OCI-LY7 (cell line): ENCODE measurements at regions of chr16 and their contacts with region 1.

Region 1: GRCh38 chr16:88505405-88506082 is 52.5 kb downstream of the ZFPM1 start:
- DNase-seq: peak; percentile 79
- H3K4me3 ChIP-seq: no peak overlapping the region
- H3K27ac ChIP-seq: no peak overlapping the region
- H3K4me1 ChIP-seq: peaks cover 12% of the 10 kb centered on the region
- CTCF ChIP-seq: peak; percentile 76

Region 2: DNA sequence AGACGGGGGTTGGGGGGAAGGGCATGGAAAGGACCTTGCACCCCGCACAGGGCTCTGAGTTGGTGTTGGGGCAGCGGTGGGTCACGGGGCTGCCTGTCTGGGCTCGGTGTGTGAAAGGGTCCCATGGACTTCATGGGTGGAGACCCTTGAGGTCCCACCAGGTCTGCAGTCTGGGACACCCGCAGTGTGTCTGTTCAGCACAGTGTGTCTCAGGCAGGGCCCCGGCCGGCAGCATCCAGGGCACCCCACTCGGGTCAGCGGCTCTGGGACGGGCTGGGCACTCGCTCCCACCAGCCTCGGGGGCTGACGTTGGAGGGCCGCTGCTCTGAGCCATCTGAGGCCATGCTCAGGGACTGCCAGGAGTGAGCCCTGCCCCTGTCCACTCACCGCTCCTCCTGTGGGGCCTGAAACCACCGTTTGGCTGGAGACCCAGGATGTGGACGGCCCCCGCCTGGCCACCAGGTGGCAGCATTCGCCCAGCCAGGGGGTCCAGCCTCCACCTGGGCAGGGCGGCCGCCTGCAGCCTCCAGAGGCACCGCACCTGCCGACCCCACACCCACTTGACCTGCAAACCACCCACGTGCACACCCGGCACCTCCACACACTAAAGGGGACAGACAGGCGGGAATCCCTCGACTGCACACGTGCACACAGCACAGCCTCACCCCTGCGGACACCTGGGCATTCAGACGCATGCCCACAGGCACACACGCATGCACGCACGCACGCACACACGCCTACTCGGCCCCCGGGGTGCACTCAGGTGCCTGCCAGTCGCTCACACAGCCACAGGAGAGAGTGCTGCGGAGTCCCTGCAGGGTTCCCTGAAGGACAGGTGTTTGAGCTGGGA is 62.6 kb before region 1 on chr16:
- CTCF ChIA-PET with region 1: no interaction called
- POLR2A ChIA-PET with region 1: no interaction called
- intact Hi-C with region 1: loop called (anchors 1 kb)
- DNase-seq: peak; percentile 76
- H3K4me3 ChIP-seq: no peak overlapping the region
- H3K27ac ChIP-seq: no peak overlapping the region
- H3K4me1 ChIP-seq: no peaks in the 10 kb centered on the region
- CTCF ChIP-seq: peak; percentile 88

Region 3: DNA sequence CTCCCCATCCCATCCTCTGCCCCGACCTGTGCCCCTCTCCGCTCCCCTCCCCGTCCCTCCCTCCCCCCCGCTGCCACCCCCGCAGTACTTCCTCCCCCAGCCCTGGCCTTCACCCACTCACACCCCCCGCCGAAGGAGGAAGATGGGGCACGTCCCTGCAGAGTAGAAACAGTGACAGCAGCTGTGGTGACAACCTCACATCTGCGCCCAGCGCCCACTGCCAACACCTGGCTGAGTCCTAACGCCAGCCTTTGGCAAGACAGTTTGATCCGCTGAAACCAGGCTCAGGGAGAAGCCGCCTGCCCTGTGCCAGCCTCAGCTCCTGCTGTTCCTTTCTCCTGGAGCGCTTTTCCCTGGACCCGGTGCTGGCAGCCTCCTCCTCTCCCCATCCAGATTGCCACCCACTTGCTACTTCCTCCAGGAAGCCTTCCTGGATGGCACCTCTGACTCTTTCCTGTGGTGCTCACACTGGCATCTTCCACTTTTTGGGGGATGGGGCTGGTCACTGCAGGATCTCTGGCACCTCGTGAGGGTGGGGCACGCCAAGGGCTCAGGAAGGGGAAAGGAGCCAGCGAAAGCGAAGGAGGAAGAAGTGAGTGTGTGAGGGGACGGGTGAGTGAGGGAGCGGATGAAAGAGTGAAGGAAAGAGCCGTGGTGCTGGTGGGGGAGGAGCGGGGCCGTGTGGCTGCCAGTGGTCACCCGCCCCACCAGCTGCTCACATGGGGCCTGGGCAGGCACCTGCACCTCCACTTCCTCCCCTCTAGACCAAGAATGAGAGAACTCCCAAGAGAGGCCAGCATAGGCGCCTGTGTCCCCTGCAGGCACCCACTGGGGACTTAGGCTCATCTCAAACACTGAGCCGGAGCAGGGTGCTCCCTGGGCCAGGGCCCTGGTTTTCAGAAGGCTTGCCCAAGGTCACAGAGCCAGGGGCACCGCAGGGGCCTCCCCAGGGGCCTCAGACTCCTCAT is 25.5 kb before region 1 on chr16:
- CTCF ChIA-PET with region 1: no interaction called
- POLR2A ChIA-PET with region 1: no interaction called
- intact Hi-C with region 1: loop called (anchors 1 kb)
- DNase-seq: peak; percentile 78
- H3K4me3 ChIP-seq: peak overlapping the region; percentile 36
- H3K27ac ChIP-seq: peak overlapping the region; percentile 47
- H3K4me1 ChIP-seq: peaks cover 54% of the 10 kb centered on the region
- CTCF ChIP-seq: no peak